Panc1 (cell line): ENCODE measurements at regions of chr2 and their contacts with region 1.

Region 1: DNA sequence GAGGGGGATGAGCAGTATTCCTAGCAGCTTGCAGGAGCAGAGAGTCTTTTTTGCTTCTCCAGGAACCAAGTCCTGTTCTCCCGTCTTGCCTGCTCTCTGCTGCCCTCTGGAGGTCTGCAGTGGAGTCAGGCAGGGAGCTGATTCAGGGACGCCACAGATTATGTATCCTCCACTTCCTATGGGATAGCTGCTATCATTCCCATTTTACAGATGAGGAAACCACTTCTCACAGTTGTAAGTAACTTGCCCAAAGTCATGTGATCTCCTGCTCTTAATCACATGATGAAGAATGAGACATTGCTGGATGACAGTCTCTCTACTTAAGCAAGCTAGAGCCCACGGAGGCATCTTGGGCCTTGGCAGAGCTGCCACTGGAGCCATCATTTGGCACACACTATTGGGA is 8.3 kb downstream of the SLC4A5 start:
- DNase-seq: peak; percentile 61
- ATAC-seq: peak; percentile 94
- H3K4me3 ChIP-seq: no peak overlapping the region
- H3K27ac ChIP-seq: no peak overlapping the region
- H3K4me1 ChIP-seq: no peaks in the 10 kb centered on the region
- H3K27me3 ChIP-seq: no peaks in the 10 kb centered on the region; the same call in 1 of the 2 replicates
- CTCF ChIP-seq: peak; percentile 98

Region 2: GRCh38 chr2:73851274-73851673 is 483.7 kb before region 1 on chr2:
- CTCF ChIA-PET with region 1: no interaction called
- POLR2A ChIA-PET with region 1: no interaction called
- in situ Hi-C with region 1: no loop called
- intact Hi-C with region 1: no loop called
- DNase-seq: no peak
- ATAC-seq: no peak
- H3K4me3 ChIP-seq: no peak overlapping the region
- H3K27ac ChIP-seq: no peak overlapping the region
- H3K4me1 ChIP-seq: no peaks in the 10 kb centered on the region
- H3K27me3 ChIP-seq: no peaks in the 10 kb centered on the region
- CTCF ChIP-seq: peak; percentile 54

Region 3: GRCh38 chr2:74250189-74250631 is 84.7 kb before region 1 on chr2:
- CTCF ChIA-PET with region 1: interaction called, 16 read pairs
- POLR2A ChIA-PET with region 1: no interaction called
- in situ Hi-C with region 1: no loop called
- intact Hi-C with region 1: loop called (anchors 5 kb)
- DNase-seq: peak; percentile 17
- ATAC-seq: peak; percentile 83
- H3K4me3 ChIP-seq: no peak overlapping the region
- H3K27ac ChIP-seq: no peak overlapping the region
- H3K4me1 ChIP-seq: no peaks in the 10 kb centered on the region
- H3K27me3 ChIP-seq: no peaks in the 10 kb centered on the region
- CTCF ChIP-seq: peak; percentile 89

Region 4: DNA sequence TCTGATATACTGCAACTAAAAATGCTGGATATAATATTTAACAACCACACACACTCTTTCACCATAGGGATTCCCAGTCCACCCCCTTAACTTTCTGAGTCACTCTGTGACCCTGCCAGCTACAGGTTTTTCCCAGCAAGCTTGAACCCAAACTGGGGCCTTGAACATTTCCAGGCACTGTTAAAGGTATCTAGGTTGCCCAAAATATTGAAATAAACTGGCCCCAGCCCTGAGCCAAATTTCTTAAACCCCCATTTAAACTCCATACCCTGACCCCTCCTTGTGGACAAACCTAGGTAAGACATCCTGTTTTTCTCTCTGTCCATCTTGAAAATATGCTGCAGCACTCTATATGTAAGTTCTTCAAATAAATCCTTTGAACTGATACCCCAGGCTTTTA is 64.9 kb after region 1 on chr2:
- CTCF ChIA-PET with region 1: no interaction called
- POLR2A ChIA-PET with region 1: no interaction called
- in situ Hi-C with region 1: no loop called
- intact Hi-C with region 1: no loop called
- DNase-seq: no peak
- ATAC-seq: peak; percentile 73; the same call in 1 of the 2 replicates
- H3K4me3 ChIP-seq: no peak overlapping the region
- H3K27ac ChIP-seq: no peak overlapping the region
- H3K4me1 ChIP-seq: no peaks in the 10 kb centered on the region
- H3K27me3 ChIP-seq: no peaks in the 10 kb centered on the region
- CTCF ChIP-seq: peak; percentile 68